Activated CD4-positive, alpha-beta T cell treated with anti-CD3 and anti-CD28 coated beads for 36 hours (primary cell): ENCODE measurements at regions of chr6 and their contacts with region 1.

Region 1: GRCh38 chr6:52786249-52786956 is 17.2 kb downstream of the GSTA1 start:
- DNase-seq: no peak
- ATAC-seq: no peak
- H3K4me3 Mint-ChIP-seq: no peak overlapping the region
- H3K27ac Mint-ChIP-seq: no peak overlapping the region
- H3K4me1 Mint-ChIP-seq: no peaks in the 10 kb centered on the region
- H3K27me3 Mint-ChIP-seq: peaks cover 3% of the 10 kb centered on the region

Region 2: GRCh38 chr6:52059821-52060220 is 726.6 kb before region 1 on chr6:
- CTCF ChIA-PET with region 1: no interaction called
- POLR2A ChIA-PET with region 1: no interaction called
- intact Hi-C with region 1: no loop called
- DNase-seq: no peak
- ATAC-seq: no peak
- H3K4me3 Mint-ChIP-seq: no peak overlapping the region
- H3K27ac Mint-ChIP-seq: no peak overlapping the region
- H3K4me1 Mint-ChIP-seq: peaks cover 12% of the 10 kb centered on the region
- H3K27me3 Mint-ChIP-seq: peaks cover 8% of the 10 kb centered on the region

Region 3: DNA sequence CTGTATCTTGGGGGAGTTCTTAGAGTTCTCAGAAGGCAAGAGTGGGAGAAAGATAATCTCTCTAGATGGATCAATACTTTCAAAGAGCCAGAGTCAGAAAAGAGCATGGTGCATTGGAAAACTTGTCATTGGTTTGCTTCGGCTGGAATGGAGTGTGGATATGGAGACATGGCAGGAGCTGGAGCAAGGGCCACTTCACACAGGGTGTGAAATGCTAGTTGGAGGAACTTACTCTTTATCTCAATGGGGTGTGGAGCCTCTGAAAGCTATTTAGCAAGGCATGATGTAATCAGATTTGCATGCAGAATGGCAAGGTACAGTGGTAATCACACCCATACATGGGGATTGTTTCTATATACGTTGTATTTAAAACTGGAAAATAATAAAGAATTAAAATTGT is 455.9 kb before region 1 on chr6:
- CTCF ChIA-PET with region 1: no interaction called
- POLR2A ChIA-PET with region 1: no interaction called
- intact Hi-C with region 1: no loop called
- DNase-seq: no peak
- ATAC-seq: no peak
- H3K4me3 Mint-ChIP-seq: no peak overlapping the region
- H3K27ac Mint-ChIP-seq: no peak overlapping the region
- H3K4me1 Mint-ChIP-seq: peaks cover 38% of the 10 kb centered on the region
- H3K27me3 Mint-ChIP-seq: no peaks in the 10 kb centered on the region

Region 4: DNA sequence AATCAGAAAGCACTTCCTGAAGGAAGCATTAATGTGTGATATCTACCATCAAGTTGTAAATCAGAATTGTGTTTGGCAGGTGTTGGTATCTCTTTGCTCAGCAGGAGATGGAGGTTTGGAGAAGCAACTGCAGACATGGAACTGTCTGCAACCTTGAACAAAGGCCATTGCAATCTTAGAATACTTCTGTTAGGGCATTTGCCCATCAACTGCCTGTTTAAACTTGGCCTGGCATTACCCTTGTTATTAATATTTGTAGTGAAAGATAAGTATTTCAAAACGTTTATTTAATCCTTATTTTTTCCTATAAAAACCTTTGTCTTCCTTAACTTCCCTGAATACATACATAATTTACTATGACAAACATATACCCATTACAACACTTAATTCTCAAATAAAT is 40.1 kb after region 1 on chr6:
- CTCF ChIA-PET with region 1: no interaction called
- POLR2A ChIA-PET with region 1: no interaction called
- intact Hi-C with region 1: loop called in 1 of 2 experiments (anchors 1 kb)
- DNase-seq: no peak
- ATAC-seq: no peak
- H3K4me3 Mint-ChIP-seq: no peak overlapping the region
- H3K27ac Mint-ChIP-seq: no peak overlapping the region
- H3K4me1 Mint-ChIP-seq: no peaks in the 10 kb centered on the region
- H3K27me3 Mint-ChIP-seq: peaks cover 2% of the 10 kb centered on the region

Region 5: DNA sequence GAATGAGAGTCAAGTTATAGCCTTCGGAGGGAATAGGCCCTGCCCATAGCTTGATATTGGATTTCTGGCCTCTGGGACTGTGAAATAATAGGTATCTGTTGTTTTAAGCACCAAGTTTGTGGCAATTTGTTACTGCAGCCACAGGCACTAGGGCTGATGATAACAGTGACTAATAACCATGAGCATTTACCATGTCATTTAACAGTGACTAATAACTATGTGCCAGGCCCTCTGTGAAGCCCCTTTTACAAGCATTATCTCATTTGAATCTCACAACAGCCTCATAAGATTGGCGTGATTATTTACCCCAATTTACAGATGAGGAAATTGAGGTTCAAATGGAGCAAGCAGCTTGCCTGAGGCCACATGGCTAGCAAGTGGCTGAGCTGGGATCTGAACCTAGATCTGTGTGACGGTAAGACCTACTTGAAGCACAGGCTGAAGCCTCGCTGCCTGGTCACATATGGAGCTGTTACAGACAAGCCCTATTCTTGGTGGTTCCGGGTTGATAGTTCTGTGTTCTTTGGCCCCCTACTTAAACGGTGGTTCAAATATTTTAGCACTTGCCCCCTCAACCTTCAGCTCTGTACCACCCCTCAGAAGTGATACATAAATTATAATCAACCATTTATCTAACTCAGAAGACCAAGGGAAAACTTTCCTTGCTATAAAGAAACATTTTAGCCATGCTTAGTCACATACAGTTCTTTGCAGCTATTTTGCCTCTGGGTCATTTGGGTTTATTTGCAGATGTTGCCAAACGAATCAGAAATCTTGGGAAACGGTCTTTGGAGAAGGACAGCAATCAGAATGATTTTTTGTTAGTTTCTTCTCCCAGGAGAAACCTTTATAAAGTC is 464.0 kb after region 1 on chr6:
- CTCF ChIA-PET with region 1: no interaction called
- POLR2A ChIA-PET with region 1: no interaction called
- intact Hi-C with region 1: no loop called
- DNase-seq: no peak
- ATAC-seq: no peak
- H3K4me3 Mint-ChIP-seq: no peak overlapping the region
- H3K27ac Mint-ChIP-seq: no peak overlapping the region
- H3K4me1 Mint-ChIP-seq: peaks cover 3% of the 10 kb centered on the region
- H3K27me3 Mint-ChIP-seq: no peaks in the 10 kb centered on the region